Dendritic cell treated with granulocyte-macrophage colony-stimulating factor and Interleukin-4, amounts not matched to agents 40 ng/mL and 50 ng/mL, for 4 days (primary cell): ENCODE measurements at regions of chr20 and their contacts with region 1.

Region 1: GRCh38 chr20:13819885-13820645 is 35.2 kb downstream of the NDUFAF5 start:
- H3K4me3 Mint-ChIP-seq: no peak overlapping the region
- H3K27ac Mint-ChIP-seq: no peak overlapping the region
- H3K4me1 Mint-ChIP-seq: peaks cover 17% of the 10 kb centered on the region
- H3K27me3 Mint-ChIP-seq: no peaks in the 10 kb centered on the region

Region 2: GRCh38 chr20:13930281-13930680 is 110.2 kb after region 1 on chr20:
- intact Hi-C with region 1: no loop called
- H3K4me3 Mint-ChIP-seq: no peak overlapping the region
- H3K27ac Mint-ChIP-seq: no peak overlapping the region
- H3K4me1 Mint-ChIP-seq: no peaks in the 10 kb centered on the region
- H3K27me3 Mint-ChIP-seq: no peaks in the 10 kb centered on the region

Region 3: GRCh38 chr20:13947719-13948118 is 127.7 kb after region 1 on chr20:
- intact Hi-C with region 1: loop called (anchors 10 kb)
- H3K4me3 Mint-ChIP-seq: no peak overlapping the region
- H3K27ac Mint-ChIP-seq: no peak overlapping the region
- H3K4me1 Mint-ChIP-seq: no peaks in the 10 kb centered on the region
- H3K27me3 Mint-ChIP-seq: peaks cover 2% of the 10 kb centered on the region

Region 4: GRCh38 chr20:14055127-14055742 is 235.2 kb after region 1 on chr20:
- intact Hi-C with region 1: loop called (anchors 1 kb)
- H3K4me3 Mint-ChIP-seq: no peak overlapping the region
- H3K27ac Mint-ChIP-seq: no peak overlapping the region
- H3K4me1 Mint-ChIP-seq: no peaks in the 10 kb centered on the region
- H3K27me3 Mint-ChIP-seq: peaks cover 3% of the 10 kb centered on the region